Right lobe of liver (tissue), 6 donors: ENCODE measurements at regions of chr9 and their contacts with region 1.

Region 1: DNA sequence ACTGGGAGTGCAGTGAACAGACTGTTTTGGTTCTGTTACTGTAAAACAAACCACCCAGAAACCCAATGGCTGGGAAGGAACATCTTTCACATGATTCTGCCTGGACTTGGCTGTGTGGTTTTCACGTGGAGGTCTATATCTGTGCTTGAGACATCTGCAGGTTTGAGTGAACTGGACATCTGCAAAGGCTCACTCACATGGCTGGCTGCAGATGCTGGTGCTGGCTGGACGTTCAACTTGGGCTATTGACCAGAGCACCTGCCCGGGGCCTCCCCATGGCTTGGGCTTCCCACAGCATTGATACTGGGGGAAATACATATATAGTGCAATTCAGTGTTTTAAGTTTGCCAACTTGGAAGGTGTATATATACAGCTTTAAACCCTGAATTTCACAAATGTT is 6.8 kb downstream of the CTSL start:
- DNase-seq: no peak
- ATAC-seq: peak; percentile 24 to 56 (median 33)
- H3K4me3 ChIP-seq: no peak overlapping the region
- H3K27ac ChIP-seq: no peak overlapping the region
- H3K4me1 ChIP-seq: no peaks in the 10 kb centered on the region
- H3K27me3 ChIP-seq: no peaks in the 10 kb centered on the region
- CTCF ChIP-seq: no peak
- POLR2A ChIP-seq: no peak

Region 2: DNA sequence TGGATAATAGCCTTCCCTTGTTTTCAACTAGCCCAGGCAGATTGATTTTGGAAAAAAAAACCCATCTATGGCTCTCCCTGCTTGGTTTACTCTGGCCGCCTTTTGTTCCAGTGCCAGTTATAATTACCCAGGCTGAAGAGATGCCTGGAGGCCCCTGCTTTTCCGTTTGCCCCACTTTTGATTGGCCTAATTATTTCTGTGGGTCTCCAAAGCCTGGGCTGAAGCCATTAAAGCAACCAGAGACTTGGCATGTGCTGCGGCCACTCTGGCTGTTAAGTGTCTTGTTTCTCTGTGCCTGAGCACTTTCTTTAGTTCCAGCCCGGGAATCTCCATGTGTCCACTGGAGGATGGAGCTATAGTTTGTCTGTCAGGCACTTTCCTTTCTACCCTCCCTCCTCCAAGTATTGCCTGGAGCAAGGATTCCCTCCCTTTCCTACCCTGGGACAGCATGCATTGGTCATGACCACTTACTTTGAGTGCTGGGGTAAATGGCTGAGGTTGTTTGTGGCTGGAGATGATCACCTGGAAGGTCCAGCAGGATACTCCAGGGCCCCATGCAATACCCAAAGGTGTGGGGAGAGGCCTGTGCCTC is 111.9 kb before region 1 on chr9:
- intact Hi-C with region 1: no loop called
- DNase-seq: no peak
- ATAC-seq: peak in 1 of 4 donors; percentile 13
- H3K4me3 ChIP-seq: no peak overlapping the region
- H3K27ac ChIP-seq: no peak overlapping the region
- H3K4me1 ChIP-seq: no peaks in the 10 kb centered on the region
- H3K27me3 ChIP-seq: no peaks in the 10 kb centered on the region
- CTCF ChIP-seq: no peak
- POLR2A ChIP-seq: no peak

Region 3: DNA sequence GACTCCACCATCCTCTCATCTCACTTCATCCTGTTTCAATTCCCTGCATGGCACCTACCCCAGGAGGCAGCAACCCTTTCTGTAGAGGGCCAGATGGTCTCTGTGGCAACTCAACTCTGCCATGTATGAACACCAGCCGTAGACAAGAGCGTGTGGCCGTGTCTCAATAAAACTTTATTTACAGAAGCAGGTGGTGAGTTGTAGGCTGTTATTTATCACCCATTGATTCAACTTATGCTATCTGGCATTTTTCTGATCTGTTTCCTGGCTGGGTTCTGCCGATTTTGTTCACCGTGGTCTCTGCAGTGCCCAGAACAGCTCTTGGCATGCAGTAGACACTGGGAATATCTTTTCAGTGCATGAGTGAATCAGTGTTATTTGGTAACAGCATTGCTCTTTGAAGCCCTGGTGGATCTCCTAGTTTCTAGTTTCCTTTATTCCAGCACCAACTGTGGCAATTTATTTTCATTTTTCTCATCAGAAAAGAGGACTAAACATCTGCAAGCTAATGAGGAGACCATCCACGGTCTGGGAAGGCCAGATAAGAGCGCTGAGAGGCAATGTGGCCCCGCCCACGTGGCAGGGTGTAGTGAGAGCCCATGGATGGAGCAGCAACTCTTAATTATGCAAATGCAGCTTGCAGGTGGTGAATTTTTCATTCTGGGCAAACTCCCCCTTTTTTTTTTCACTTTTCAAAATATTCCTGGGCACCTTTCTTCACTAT is 71.0 kb after region 1 on chr9:
- intact Hi-C with region 1: loop called in 1 of 2 experiments (anchors 10 kb)
- DNase-seq: no peak
- ATAC-seq: no peak
- H3K4me3 ChIP-seq: no peak overlapping the region
- H3K27ac ChIP-seq: no peak overlapping the region
- H3K4me1 ChIP-seq: peaks cover 0 to 6% (median 3%) of the 10 kb centered on the region in 4 donors
- H3K27me3 ChIP-seq: no peaks in the 10 kb centered on the region
- CTCF ChIP-seq: no peak
- POLR2A ChIP-seq: no peak

Region 4: DNA sequence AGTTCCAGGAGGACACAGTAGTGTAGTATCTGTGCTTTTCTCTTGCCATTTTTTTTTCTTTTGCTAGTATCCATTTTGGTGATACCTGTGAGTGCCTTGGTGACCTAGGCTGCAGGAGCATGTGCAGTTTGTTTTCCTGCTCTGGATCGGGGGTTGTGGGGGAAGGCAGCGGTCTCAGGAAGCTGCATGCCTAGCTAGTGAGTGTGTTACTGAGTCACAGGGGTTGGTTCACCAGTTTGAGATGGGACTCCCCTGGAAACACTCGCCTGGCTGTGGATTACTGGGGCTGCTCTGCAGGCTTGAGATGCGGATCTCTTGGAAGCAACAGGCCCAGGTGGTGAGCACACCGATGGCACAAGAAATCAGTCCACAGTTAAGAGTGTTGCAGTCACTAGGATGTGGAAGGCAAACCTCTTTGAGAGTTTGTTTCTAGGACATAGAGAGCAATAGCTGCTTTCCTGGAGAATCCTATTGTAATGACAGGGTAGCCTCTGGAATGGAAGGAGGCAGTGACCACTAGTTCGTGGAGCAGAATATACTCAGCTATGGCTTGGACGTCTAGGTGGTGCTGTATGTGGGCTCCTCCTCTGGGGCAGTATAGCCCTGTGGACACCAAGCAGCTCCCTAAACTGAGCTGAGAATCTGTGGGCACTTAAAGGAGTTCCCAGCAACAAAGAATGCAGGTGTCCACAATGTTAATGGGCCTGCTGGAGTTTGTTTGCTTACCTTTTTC is 129.9 kb after region 1 on chr9:
- intact Hi-C with region 1: no loop called
- DNase-seq: no peak
- ATAC-seq: no peak
- H3K4me3 ChIP-seq: no peak overlapping the region
- H3K27ac ChIP-seq: no peak overlapping the region
- H3K4me1 ChIP-seq: no peaks in the 10 kb centered on the region
- H3K27me3 ChIP-seq: no peaks in the 10 kb centered on the region
- CTCF ChIP-seq: no peak
- POLR2A ChIP-seq: no peak